OCI-LY7 (cell line): ENCODE measurements at regions of chr11 and their contacts with region 1.

Region 1: GRCh38 chr11:62591448-62592145 is at the start of gene TUT1:
- DNase-seq: peak; percentile 100
- H3K4me3 ChIP-seq: peak within 1 kb of the TSS; percentile 85
- H3K27ac ChIP-seq: peak within 1 kb of the TSS; percentile 79
- H3K4me1 ChIP-seq: peaks cover 33% of the 10 kb centered on the region
- CTCF ChIP-seq: 0 out of 2 replicates have a peak, but pooled peaks have one; percentile 7
- total RNA-seq, gene TUT1: 15.6 and 22.5 TPM in 2 replicates

Region 2: DNA sequence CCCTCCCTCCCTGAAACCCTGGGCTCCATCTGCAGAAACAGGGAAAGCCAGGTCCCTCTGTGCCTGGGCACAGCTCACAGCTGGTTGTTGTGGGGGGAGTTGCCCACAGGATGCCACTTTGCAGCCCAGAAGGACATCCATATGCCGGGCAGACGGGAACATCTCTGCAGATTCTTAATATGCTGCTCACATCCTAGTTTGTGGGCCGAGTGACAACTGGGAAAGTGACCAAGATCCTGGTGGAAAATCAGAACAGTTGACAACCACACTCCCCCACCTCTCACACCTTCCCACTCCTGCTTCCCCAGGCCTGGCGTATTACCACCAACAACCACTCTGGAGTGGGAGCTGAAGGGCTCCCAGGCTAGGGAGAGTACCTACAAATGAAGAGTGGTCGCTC is 180.1 kb before region 1 on chr11:
- CTCF ChIA-PET with region 1: no interaction called
- POLR2A ChIA-PET with region 1: no interaction called
- intact Hi-C with region 1: no loop called
- DNase-seq: no peak
- H3K4me3 ChIP-seq: no peak overlapping the region
- H3K27ac ChIP-seq: no peak overlapping the region
- H3K4me1 ChIP-seq: no peaks in the 10 kb centered on the region
- CTCF ChIP-seq: no peak

Region 3: DNA sequence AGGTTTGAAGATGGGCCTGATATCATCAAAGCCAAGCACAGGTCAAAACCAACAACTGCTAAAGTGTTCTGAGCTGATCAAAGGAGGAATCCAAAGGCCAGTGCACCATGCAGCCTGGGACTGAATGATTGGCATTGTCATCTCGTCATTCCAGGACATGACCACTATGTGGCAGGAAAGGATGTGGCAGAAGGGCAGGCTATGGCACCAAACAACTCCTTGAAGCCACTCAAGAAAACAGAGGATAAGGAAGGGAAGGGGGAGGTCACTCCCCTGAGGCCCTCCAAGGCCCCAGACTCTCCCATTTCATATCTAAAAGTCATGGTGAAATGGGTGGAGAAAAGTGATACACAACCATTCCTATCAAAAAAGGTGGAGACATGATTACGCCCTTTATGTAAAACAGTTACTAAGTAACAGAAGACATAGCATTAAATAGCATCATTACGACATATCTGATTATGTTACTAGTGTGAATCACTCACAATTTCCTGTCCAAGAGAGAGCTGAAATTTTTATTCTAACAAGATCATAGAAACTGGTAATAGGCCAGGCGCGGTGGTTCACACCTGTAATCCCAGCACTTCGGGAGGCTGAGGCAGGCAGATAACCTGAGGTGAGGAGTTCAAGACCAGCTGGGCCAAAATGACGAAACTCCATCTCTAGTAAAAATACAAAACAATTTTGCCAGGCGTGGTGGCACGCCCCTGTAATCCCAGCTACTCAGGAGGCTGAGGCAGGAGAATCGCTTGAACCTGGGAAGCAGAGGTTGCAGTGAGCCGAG is 94.3 kb before region 1 on chr11:
- CTCF ChIA-PET with region 1: no interaction called
- POLR2A ChIA-PET with region 1: no interaction called
- intact Hi-C with region 1: no loop called
- DNase-seq: peak; percentile 26
- H3K4me3 ChIP-seq: no peak overlapping the region
- H3K27ac ChIP-seq: no peak overlapping the region
- H3K4me1 ChIP-seq: no peaks in the 10 kb centered on the region
- CTCF ChIP-seq: peak; percentile 36

Region 4: GRCh38 chr11:62573592-62574362 is 17.8 kb before region 1 on chr11 and contains the start of gene EEF1G:
- CTCF ChIA-PET with region 1: interaction called, 5 read pairs
- POLR2A ChIA-PET with region 1: interaction called, 35 read pairs
- intact Hi-C with region 1: loop called (anchors 2 kb)
- DNase-seq: peak; percentile 99
- H3K4me3 ChIP-seq: peak within 1 kb of the TSS; percentile 87
- H3K27ac ChIP-seq: peak within 1 kb of the TSS; percentile 62
- H3K4me1 ChIP-seq: peaks cover 35% of the 10 kb centered on the region
- CTCF ChIP-seq: no peak
- total RNA-seq, gene EEF1G: 2,328 and 2,651 TPM in 2 replicates

Region 5: DNA sequence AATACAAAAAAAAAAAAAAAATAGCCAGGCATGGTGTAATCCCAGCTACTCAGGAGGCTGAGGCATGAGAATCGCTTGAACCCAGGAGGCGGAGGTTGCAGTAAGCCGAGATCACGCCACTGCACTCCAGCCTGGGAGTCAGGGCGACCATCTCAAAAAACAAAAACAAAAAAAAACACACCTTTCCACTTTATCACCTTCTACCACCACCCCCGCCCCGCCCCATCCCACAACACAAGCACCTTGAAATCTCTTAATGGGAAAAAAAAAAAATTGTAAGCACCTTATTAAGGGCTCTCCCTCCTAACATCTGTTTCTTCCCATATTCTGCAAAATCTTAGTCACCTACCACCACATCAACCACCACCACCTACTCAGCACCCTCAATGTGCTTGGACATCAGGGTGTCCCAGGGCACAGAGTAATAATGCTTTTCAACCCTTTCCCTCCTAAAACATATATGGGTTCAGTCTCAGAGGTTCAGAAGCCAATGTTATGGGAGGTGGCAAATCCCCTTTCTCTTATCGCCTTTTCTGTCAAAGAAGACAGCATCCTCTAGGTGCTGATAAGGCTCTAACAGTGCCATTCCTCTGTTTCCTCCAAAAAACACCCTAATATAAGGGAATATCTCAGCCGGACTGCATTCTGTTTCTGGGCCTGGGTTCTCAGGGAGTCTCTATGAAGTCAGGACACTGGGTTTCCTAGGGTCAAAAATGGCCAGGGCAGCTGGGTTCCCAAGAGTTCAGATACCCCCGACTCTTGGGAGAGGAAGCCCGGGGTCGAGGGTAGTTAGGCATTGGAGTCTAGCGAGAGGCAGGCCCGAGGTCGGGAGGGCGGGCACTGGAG is 60.8 kb after region 1 on chr11:
- CTCF ChIA-PET with region 1: interaction called, 4 read pairs
- POLR2A ChIA-PET with region 1: interaction called, 5 read pairs
- intact Hi-C with region 1: loop called (anchors 2 kb)
- DNase-seq: no peak
- H3K4me3 ChIP-seq: peak overlapping the region; percentile 97
- H3K27ac ChIP-seq: peak overlapping the region; percentile 73
- H3K4me1 ChIP-seq: peaks cover 26% of the 10 kb centered on the region
- CTCF ChIP-seq: no peak

Region 6: DNA sequence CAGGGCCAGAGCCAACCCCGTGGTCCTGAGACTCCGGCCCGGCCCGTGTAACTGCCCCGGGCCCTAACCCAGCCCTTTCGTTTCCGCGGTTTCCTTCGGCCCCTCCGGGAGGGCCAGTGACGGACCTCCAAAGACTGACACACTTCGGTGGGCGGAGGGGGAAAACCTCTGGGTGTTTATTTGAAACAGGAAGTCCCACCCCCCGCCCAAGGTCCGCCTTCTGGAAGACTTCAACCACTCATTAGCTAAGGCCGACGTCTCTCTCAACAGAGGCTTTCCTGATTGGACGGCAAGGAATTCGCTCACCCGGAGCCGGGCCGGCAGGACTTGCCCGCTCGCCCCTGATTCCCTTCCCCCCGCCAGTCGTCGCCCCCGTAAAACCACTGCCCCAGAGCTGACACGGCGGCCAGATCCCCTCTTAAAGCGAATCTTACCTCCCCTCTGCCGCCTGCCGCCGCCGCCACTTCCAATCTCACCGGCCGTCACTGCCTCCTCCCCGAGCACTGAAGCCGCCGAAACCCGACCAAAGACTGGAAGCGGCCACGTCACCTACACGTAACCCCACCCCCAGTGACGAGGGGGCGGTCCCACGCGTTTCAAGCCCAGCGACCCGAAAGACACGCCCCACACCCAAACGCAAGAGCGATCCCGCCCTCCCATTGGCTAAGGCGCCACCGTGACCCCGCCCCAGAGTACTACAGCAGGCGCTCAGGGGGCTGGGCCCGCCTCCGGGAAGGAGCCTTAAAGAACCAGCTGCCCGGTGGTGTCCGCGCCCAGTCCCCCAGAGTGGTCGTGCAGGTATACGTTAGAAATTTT is 240.1 kb after region 1 on chr11 and contains the start of gene STX5:
- CTCF ChIA-PET with region 1: no interaction called
- POLR2A ChIA-PET with region 1: no interaction called
- intact Hi-C with region 1: loop called (anchors 10 kb)
- DNase-seq: peak; percentile 99
- H3K4me3 ChIP-seq: peak within 1 kb of the TSS; percentile 97
- H3K27ac ChIP-seq: peak within 1 kb of the TSS; percentile 71
- H3K4me1 ChIP-seq: peaks cover 16% of the 10 kb centered on the region
- CTCF ChIP-seq: no peak
- total RNA-seq, gene STX5: 21.7 and 30.6 TPM in 2 replicates